PC-9 (cell line): ENCODE measurements at regions of chr2 and their contacts with region 1.

Region 1: DNA sequence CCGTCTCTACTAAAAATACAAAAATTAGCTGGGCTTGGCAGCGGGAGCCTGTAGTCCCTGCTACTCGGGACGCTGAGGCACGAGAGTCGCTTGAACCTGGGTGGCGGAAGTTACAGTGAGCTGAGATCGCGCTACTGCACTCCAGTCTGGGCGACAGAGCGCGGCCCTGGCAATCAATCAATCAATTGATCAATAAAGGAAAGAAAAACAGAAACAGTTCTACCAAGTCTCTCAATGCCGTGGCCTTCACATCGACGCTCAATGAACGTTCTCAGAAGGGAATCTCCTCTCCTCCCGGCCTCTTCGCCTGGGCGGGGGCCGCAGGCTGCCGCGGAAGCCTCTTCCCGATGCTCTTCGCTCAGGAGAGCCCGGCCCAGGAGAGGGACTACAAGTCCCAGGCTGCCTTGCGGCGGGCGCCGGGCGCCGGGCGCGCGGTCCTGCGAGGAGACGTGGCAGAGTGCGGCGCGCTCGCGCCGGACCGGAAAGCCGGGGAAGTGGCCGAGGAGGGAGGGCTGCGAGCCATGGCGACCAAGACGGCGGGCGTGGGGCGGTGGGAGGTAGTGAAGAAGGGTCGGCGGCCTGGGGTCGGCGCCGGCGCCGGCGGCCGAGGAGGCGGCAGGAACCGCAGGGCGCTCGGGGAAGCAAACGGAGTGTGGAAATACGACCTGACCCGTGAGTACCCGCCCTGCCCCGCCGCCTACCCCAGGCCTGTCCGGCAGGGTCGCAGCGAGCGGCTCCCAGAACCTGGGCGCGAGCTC is at the start of gene TMEM214:
- DNase-seq: peak; percentile 70 to 83
- H3K4me3 ChIP-seq: peak within 1 kb of the TSS; percentile 95
- H3K27ac ChIP-seq: peak within 1 kb of the TSS; percentile 29; the same call in 1 of the 2 replicates
- H3K4me1 ChIP-seq: peaks cover 16% of the 10 kb centered on the region
- H3K27me3 ChIP-seq: no peaks in the 10 kb centered on the region
- CTCF ChIP-seq: no peak
- total RNA-seq, gene TMEM214: 60.9 and 65.6 TPM in 2 replicates

Region 2: DNA sequence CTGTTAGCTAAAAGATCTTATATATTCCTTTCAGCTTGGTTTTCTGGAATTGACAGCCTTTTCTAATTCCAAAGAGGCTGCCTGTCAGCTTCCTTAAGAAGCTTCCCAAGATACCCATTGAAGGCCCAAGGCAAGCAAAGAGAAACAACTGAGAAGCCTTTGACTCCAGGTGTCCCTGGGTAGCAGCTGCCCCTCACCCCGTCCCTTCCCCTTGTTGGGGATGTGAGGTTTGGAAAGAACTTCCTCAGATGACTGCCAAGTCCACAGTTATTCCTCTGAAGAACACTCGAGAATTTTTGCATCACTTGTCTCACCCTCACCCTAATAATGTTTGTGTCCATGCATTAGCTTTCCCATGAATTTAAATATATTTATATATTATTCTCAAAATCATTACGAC is 48.9 kb before region 1 on chr2:
- CTCF ChIA-PET with region 1: no interaction called
- POLR2A ChIA-PET with region 1: no interaction called
- intact Hi-C with region 1: no loop called
- DNase-seq: no peak
- H3K4me3 ChIP-seq: no peak overlapping the region
- H3K27ac ChIP-seq: no peak overlapping the region
- H3K4me1 ChIP-seq: peaks cover 21% of the 10 kb centered on the region
- H3K27me3 ChIP-seq: no peaks in the 10 kb centered on the region
- CTCF ChIP-seq: no peak

Region 3: DNA sequence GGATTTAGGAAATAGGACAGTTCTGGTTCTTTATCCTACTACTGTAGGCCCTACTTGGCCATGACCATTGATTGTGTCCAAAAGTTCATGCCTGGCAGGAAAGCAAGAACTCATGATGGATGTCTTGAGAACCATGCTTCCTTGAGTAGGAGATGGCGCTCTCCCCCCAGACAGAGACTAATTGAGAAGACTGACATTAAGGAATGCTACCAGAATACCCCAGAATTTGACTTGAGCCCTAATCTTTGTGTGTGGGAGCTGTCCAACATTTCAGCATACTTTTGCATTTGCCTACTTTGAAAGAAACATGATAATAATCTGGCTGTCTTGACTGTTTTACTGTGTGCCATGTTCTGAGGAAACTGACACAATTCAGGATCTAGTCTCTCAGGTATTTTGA is 38.9 kb before region 1 on chr2:
- CTCF ChIA-PET with region 1: no interaction called
- POLR2A ChIA-PET with region 1: no interaction called
- intact Hi-C with region 1: no loop called
- DNase-seq: no peak
- H3K4me3 ChIP-seq: no peak overlapping the region
- H3K27ac ChIP-seq: no peak overlapping the region
- H3K4me1 ChIP-seq: peaks cover 9% of the 10 kb centered on the region
- H3K27me3 ChIP-seq: no peaks in the 10 kb centered on the region
- CTCF ChIP-seq: no peak

Region 4: DNA sequence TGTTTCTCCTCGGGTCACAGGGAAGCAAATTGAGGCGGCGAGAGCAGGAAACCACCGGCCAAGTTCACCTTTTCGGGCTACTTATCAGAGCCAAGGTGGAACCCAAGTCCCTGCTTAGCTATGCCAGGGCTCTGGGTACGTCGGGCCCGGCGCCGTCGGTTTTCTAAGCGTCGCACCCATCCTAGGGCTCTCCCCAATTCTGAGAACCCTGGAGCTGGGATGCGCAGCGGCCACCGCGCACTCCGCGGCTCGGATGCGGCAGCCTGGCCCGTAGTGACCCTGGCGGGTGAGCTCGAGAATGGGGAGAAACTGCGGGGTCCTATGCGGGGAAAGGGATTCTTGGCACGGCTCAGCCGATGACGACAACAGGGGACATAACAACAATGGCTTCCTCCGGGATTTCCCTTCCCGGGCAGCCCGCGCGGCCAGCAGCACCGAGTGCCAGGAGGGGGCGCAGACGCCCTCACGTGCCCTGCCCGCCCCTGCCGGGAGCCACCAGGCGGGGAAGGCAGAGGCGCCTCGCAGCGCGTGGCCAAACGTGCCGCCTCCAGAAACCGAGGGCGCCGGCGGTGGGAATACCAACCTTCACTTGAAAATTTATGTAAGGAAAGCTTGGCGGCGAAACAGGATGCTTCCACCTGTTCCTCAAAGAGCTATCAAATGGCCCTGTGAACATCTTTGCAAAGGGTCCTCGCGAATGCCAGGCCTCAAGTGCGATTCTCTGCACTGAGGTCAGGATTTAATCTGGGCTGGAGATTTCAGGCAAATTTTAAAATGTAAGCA is 232.3 kb after region 1 on chr2:
- CTCF ChIA-PET with region 1: no interaction called
- POLR2A ChIA-PET with region 1: interaction called, 11 read pairs
- intact Hi-C with region 1: no loop called
- DNase-seq: peak in 1 of 2 experiments; percentile 66
- H3K4me3 ChIP-seq: no peak overlapping the region
- H3K27ac ChIP-seq: no peak overlapping the region
- H3K4me1 ChIP-seq: no peaks in the 10 kb centered on the region
- H3K27me3 ChIP-seq: peaks cover 52% of the 10 kb centered on the region
- CTCF ChIP-seq: no peak; the same call in 1 of the 2 replicates